Lower lobe of right lung (tissue), 2 donors: ENCODE measurements at regions of chr22 and their contacts with region 1.

Region 1: GRCh38 chr22:37544955-37545699 is 15.2 kb upstream of the CDC42EP1 start:
- DNase-seq: peak; percentile 82
- ATAC-seq: peak; percentile 79 to 81
- H3K4me3 ChIP-seq: peak overlapping the region; percentile 37
- H3K27ac ChIP-seq: peak overlapping the region; percentile 93
- H3K4me1 ChIP-seq: peaks cover 63% of the 10 kb centered on the region
- H3K27me3 ChIP-seq: no peaks in the 10 kb centered on the region
- CTCF ChIP-seq: peak; percentile 84

Region 2: GRCh38 chr22:37599153-37599552 is 54.0 kb after region 1 on chr22:
- intact Hi-C with region 1: loop called (anchors 10 kb)
- DNase-seq: no peak
- ATAC-seq: no peak
- H3K4me3 ChIP-seq: no peak overlapping the region
- H3K27ac ChIP-seq: no peak overlapping the region
- H3K4me1 ChIP-seq: peaks cover 9% of the 10 kb centered on the region
- H3K27me3 ChIP-seq: no peaks in the 10 kb centered on the region
- CTCF ChIP-seq: no peak